ENCODE measurements at regions of chr3 and their contacts with region 1.

Region 1: GRCh38 chr3:42247576-42248027 is 18.4 kb downstream of the CCK start:
- DNase-seq: peak in 1 of 2 experiments; percentile 84
- H3K4me3 ChIP-seq: no peak overlapping the region
- H3K27ac ChIP-seq: no peak overlapping the region
- H3K4me1 ChIP-seq: no peaks in the 10 kb centered on the region
- H3K27me3 ChIP-seq: no peaks in the 10 kb centered on the region
- CTCF ChIP-seq: peak; percentile 18 to 94 (median 64)
- EP300 ChIP-seq: no peak
- POLR2A ChIP-seq: no peak
- RAD21 ChIP-seq: peak; percentile 96 to 98

Region 2: GRCh38 chr3:42118762-42119361 is 128.7 kb before region 1 on chr3:
- CTCF ChIA-PET with region 1: no interaction called
- POLR2A ChIA-PET with region 1: no interaction called
- DNase-seq: peak in 1 of 2 experiments; percentile 19
- H3K4me3 ChIP-seq: no peak overlapping the region
- H3K27ac ChIP-seq: no peak overlapping the region
- H3K4me1 ChIP-seq: peaks cover 2 to 5% (median 4%) of the 10 kb centered on the region in 4 experiments; a peak in 6 of 7 replicates
- H3K27me3 ChIP-seq: no peaks in the 10 kb centered on the region
- CTCF ChIP-seq: peak; percentile 74 to 83 (median 78)
- EP300 ChIP-seq: no peak
- POLR2A ChIP-seq: no peak
- RAD21 ChIP-seq: peak; percentile 82 to 86

Region 3: DNA sequence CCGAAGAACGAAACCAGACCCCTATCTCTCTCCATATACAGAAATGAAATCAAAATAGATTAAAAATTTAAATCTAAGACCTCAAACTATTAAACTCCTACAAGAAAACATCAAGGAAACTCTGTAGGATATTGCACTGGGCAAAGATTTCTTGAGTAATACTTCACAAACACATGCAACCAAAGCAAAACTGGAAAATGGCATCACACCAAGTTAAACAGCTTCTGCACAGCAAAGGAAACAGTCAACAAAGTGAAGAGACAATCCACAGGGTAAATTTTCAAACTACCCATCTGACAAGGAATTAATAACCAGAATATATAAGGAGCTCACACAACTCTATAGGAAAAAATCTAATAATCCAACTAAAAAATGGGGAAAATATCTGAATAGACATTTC is 11.0 kb before region 1 on chr3:
- CTCF ChIA-PET with region 1: interaction called, 27 read pairs
- POLR2A ChIA-PET with region 1: no interaction called
- DNase-seq: no peak
- H3K4me3 ChIP-seq: no peak overlapping the region
- H3K27ac ChIP-seq: no peak overlapping the region
- H3K4me1 ChIP-seq: no peaks in the 10 kb centered on the region
- H3K27me3 ChIP-seq: no peaks in the 10 kb centered on the region
- CTCF ChIP-seq: no peak
- EP300 ChIP-seq: no peak
- POLR2A ChIP-seq: no peak
- RAD21 ChIP-seq: no peak

Region 4: DNA sequence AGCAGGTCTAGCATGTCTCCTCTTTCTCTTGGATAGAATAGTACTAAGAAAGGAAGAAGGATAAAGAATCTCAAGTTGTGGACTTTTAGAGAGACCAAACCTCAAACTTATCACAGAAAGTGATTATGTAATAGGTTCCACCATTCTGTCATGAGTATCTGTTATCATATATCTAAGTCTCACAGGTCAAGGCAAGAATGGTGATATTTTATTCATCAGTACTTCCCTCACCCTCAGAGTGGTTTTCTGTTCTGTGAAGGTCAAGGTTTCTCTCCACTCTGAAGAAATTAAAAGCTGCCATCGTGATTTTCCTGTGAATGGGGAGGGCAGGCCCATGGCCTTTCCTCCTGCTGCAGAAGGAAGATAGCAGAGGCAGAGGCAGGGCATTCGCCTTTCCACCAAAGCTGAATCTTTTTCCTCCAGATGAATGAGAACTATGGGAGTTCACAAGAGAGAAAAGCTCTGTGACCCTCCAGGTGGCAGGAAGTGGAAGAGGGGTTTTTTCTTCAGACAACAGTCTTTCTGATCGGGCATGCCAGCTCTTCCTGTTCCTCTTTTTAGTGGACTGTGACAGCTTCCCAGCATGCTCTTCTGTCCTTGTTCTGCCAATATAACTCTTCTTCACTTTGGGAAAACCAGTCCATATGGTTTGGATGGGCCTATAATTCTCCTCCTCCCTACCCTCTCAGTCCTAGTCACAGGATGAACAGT is 55.5 kb after region 1 on chr3:
- CTCF ChIA-PET with region 1: interaction called, 10 read pairs
- POLR2A ChIA-PET with region 1: no interaction called
- DNase-seq: no peak
- H3K4me3 ChIP-seq: no peak overlapping the region
- H3K27ac ChIP-seq: no peak overlapping the region
- H3K4me1 ChIP-seq: no peaks in the 10 kb centered on the region
- H3K27me3 ChIP-seq: no peaks in the 10 kb centered on the region
- CTCF ChIP-seq: no peak
- EP300 ChIP-seq: no peak
- POLR2A ChIP-seq: no peak
- RAD21 ChIP-seq: no peak

Region 5: GRCh38 chr3:42434777-42435380 is 187.3 kb after region 1 on chr3:
- CTCF ChIA-PET with region 1: interaction called, 193 read pairs
- POLR2A ChIA-PET with region 1: no interaction called
- DNase-seq: no peak
- H3K4me3 ChIP-seq: no peak overlapping the region
- H3K27ac ChIP-seq: no peak overlapping the region
- H3K4me1 ChIP-seq: peaks cover 0 to 6% (median 3%) of the 10 kb centered on the region in 4 experiments; a peak in 3 of 7 replicates
- H3K27me3 ChIP-seq: no peaks in the 10 kb centered on the region; a peak in 1 of 7 replicates
- CTCF ChIP-seq: no peak
- EP300 ChIP-seq: no peak
- POLR2A ChIP-seq: no peak
- RAD21 ChIP-seq: no peak

Region 6: DNA sequence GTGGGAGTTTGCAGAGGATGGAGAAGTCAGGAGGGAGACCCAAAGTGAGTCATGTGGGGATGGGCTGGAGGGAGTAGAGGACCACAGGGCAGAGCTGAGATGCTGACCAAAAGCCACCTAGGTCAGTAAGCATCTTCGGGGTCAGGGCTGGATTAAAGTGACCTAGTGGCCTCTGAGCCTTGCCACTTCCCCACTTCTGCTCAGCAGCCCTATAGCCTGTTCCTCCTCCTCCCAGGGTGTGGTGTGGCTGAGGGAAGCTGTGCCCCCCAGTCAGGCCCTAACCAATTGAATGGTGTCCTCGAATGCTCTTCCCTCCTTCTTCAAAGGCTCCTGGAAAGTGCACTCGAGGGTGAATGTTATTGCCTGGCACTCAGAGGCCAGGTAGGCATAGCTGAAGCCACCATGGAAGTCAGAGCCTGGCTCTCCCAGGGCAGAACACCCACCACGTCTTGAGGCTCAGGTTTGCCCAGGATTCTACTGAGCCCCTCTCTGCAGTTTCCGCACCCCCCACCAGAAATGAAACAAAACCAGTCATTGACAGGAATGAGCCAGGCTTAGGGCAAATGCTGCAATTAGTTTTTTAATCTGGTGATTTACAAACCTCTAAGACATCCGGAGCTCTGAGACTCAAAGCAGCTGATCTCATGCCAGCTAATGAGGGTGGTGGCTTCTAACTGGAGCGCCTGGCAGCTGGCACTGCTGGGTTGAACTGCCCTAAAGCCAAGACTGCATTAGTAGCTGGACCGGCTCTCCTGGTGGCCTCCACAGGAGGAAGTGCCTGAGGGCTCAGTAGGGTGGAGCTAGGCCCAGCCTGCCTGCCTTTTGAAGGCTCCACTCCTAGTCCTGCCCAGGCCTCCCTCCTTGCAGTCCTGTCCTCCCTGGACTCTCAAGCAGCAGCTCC is 228.9 kb after region 1 on chr3:
- CTCF ChIA-PET with region 1: interaction called, 11 read pairs
- POLR2A ChIA-PET with region 1: no interaction called
- DNase-seq: no peak
- H3K4me3 ChIP-seq: no peak overlapping the region
- H3K27ac ChIP-seq: no peak overlapping the region
- H3K4me1 ChIP-seq: no peaks in the 10 kb centered on the region; a peak in 1 of 7 replicates
- H3K27me3 ChIP-seq: peaks cover 0 to 1% (median 0%) of the 10 kb centered on the region in 4 experiments; a peak in 2 of 7 replicates
- CTCF ChIP-seq: no peak
- EP300 ChIP-seq: no peak
- POLR2A ChIP-seq: no peak
- RAD21 ChIP-seq: no peak

Region 7: GRCh38 chr3:42539869-42540714 is 292.5 kb after region 1 on chr3:
- CTCF ChIA-PET with region 1: interaction called, 82 read pairs
- POLR2A ChIA-PET with region 1: no interaction called
- DNase-seq: peak; percentile 56 to 97
- H3K4me3 ChIP-seq: no peak overlapping the region
- H3K27ac ChIP-seq: no peak overlapping the region
- H3K4me1 ChIP-seq: peaks cover 2 to 6% (median 4%) of the 10 kb centered on the region in 4 experiments
- H3K27me3 ChIP-seq: peaks cover 0 to 2% (median 0%) of the 10 kb centered on the region in 4 experiments; a peak in 1 of 7 replicates
- CTCF ChIP-seq: peak; percentile 75 to 92 (median 90)
- EP300 ChIP-seq: no peak
- POLR2A ChIP-seq: no peak
- RAD21 ChIP-seq: peak; percentile 61 to 82

Measured in H1 (cell line).